Heart left ventricle (tissue), 16 donors: ENCODE measurements at regions of chr1 and their contacts with region 1.

Region 1: GRCh38 chr1:116951200-116951935 is 41.7 kb downstream of the PTGFRN start:
- DNase-seq: peak in 2 of 5 donors; percentile 61 to 69
- ATAC-seq: peak; percentile 9 to 58 (median 32)
- H3K4me3 ChIP-seq: peak overlapping the region in 7 of 12 donors; percentile 1 to 39 (median 23)
- H3K27ac ChIP-seq: peak overlapping the region; percentile 30 to 88 (median 72)
- H3K4me1 ChIP-seq: peaks cover 0 to 71% (median 40%) of the 10 kb centered on the region in 12 donors
- H3K27me3 ChIP-seq: no peaks in the 10 kb centered on the region
- CTCF ChIP-seq: no peak
- POLR2A ChIP-seq: no peak

Region 2: DNA sequence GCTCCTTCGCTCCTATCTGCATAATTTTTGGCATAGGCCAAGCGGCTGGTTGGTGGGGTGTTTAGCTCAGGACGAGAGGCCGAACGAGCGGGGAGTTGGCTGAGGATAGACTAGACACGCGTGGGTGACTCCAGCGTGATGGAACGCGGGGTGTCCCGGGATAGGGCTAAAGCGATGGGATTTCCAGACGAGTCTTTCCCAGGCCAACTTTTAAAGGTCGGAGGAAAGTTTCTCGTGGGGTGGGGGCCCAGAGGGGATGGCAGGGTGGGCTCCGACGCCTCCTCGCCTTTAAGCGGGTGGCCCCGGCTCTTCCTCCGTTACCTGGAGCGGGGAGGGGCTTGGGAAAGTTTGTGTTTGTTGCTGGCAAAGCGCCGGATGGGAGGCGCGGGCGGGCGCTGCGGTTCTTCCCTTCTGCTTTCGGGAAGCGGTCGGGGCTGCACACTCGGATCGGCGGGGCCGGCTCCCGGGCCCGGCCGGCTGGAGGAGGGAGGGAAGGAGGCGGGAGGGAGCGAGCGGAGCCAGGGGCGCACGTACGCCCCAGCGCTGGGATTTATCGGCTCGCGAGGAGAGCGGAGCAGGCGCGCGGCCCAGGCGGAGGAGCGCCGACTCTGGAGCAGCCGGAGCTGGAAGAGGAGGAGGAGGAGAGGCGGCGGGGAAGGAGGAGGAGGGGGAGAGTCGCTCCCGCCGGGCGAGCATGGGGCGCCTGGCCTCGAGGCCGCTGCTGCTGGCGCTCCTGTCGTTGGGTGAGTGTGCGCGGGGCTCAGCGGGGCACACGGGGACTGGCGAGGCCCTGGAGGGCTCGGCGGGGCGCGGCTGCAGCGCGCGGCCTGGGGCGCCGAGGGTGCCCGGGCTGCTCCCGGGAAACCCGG is 41.6 kb before region 1 on chr1 and contains the start of gene PTGFRN:
- intact Hi-C with region 1: loop called in 3 of 10 experiments (anchors 2 to 5 kb)
- DNase-seq: peak; percentile 73 to 87 (median 83)
- ATAC-seq: peak; percentile 47 to 77 (median 72)
- H3K4me3 ChIP-seq: peak within 1 kb of the TSS; percentile 57 to 91 (median 78)
- H3K27ac ChIP-seq: peak within 1 kb of the TSS; percentile 51 to 96 (median 91)
- H3K4me1 ChIP-seq: peaks cover 0 to 43% (median 23%) of the 10 kb centered on the region in 12 donors
- H3K27me3 ChIP-seq: peaks cover 0 to 17% (median 0%) of the 10 kb centered on the region in 9 donors
- CTCF ChIP-seq: no peak
- POLR2A ChIP-seq: peak in 1 of 2 donors; percentile 21
- total RNA-seq, gene PTGFRN: 59.3 to 231 (median 137) TPM

Region 3: GRCh38 chr1:116919802-116920201 is 31.6 kb before region 1 on chr1:
- intact Hi-C with region 1: loop called in 4 of 10 experiments (anchors 2 to 5 kb)
- DNase-seq: peak in 2 of 5 donors; percentile 32 to 48
- ATAC-seq: peak in 1 of 4 donors; percentile 5
- H3K4me3 ChIP-seq: no peak overlapping the region
- H3K27ac ChIP-seq: peak overlapping the region in 6 of 12 donors; percentile 2 to 96 (median 33)
- H3K4me1 ChIP-seq: peaks cover 0 to 79% (median 45%) of the 10 kb centered on the region in 12 donors
- H3K27me3 ChIP-seq: no peaks in the 10 kb centered on the region
- CTCF ChIP-seq: peak in 3 of 12 donors; percentile 10 to 30 (median 19)
- POLR2A ChIP-seq: no peak

Region 4: GRCh38 chr1:117077267-117077666 is 125.9 kb after region 1 on chr1:
- intact Hi-C with region 1: no loop called
- DNase-seq: no peak
- ATAC-seq: peak in 2 of 4 donors; percentile 29 to 50
- H3K4me3 ChIP-seq: no peak overlapping the region
- H3K27ac ChIP-seq: no peak overlapping the region
- H3K4me1 ChIP-seq: peaks cover 0 to 4% (median 0%) of the 10 kb centered on the region in 12 donors
- H3K27me3 ChIP-seq: no peaks in the 10 kb centered on the region
- CTCF ChIP-seq: no peak
- POLR2A ChIP-seq: no peak

Region 5: DNA sequence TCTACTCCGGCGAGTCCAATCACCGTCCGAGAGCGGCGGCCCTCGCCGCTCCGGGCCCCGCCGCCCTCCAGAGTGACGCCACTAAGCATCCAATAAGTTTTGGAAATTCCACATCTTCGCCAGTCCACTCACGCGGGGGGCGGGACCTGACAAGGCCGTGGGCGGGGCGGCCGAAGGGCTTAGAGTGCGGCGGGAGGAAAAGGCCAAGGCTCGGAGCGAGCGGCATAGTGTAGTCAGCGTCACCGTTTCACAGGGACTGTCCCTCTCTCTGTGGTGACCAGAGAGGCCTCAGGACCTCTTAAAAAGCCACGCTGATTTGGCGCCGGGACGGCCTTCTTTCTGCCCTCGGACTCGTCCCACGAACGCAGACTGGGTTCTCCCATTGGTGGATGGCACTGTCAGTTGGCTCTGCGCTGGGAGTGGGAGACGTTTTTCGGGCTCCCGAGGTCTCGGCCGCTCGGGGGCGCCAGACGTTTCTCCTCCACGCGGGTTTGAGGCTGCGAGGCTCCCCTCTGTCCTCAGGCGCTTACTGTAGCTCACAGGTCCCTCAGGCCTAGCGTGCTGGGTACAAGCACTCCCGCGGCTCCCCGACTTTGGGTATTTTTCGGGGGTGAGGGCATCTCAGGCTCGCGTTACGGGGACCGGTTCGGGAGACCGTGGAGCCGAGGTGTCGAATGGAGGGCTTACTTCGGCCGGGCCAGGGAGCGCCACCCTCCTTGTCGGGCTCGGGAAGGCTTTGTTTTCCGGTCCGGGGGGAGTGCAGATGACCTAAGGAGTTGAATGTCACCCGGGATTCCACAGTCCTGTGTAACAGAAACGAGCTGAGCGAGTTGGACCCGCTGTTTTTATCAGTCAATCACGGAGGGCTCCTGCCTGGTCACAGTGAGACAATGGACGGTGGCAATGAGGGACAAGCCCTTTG is 170.7 kb after region 1 on chr1:
- intact Hi-C with region 1: no loop called
- DNase-seq: peak; percentile 97 to 98 (median 97)
- ATAC-seq: peak; percentile 98 to 99 (median 98)
- H3K4me3 ChIP-seq: peak overlapping the region; percentile 40 to 88 (median 75)
- H3K27ac ChIP-seq: peak overlapping the region; percentile 88 to 99 (median 94)
- H3K4me1 ChIP-seq: peaks cover 0 to 44% (median 19%) of the 10 kb centered on the region in 12 donors
- H3K27me3 ChIP-seq: no peaks in the 10 kb centered on the region
- CTCF ChIP-seq: peak; percentile 58 to 98 (median 80)
- POLR2A ChIP-seq: no peak